Caco-2 (cell line): ENCODE measurements at regions of chr2 and their contacts with region 1.

Region 1: DNA sequence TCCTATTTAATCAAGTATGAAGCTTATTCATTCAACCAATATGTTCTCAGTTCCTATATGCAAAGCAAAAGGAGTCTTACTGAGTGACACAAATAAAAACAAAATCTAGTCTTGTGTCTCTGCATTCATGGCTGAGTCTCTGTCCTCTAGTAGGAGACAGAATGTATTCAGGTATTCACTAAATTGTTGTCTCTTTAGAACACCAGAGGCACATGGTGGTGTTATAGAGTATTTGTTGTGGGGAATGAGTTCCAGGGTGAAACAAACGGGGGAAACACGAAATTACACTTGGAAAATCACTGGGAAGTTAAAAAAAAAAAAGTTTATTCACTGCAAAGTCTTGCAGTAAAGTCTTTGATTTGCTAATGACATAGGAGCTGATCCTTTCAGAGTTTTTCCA is 131.7 kb upstream of the FSHR start:
- DNase-seq: peak in 1 of 2 experiments; percentile 16
- H3K4me3 ChIP-seq: no peak overlapping the region
- H3K4me3 Mint-ChIP-seq: no peak overlapping the region
- H3K27ac Mint-ChIP-seq: no peak overlapping the region
- H3K4me1 ChIP-seq: no peaks in the 10 kb centered on the region
- H3K4me1 Mint-ChIP-seq: no peaks in the 10 kb centered on the region
- H3K27me3 ChIP-seq: no peaks in the 10 kb centered on the region
- H3K27me3 Mint-ChIP-seq: peaks cover 9% of the 10 kb centered on the region
- CTCF ChIP-seq: peak; percentile 29 to 41

Region 2: DNA sequence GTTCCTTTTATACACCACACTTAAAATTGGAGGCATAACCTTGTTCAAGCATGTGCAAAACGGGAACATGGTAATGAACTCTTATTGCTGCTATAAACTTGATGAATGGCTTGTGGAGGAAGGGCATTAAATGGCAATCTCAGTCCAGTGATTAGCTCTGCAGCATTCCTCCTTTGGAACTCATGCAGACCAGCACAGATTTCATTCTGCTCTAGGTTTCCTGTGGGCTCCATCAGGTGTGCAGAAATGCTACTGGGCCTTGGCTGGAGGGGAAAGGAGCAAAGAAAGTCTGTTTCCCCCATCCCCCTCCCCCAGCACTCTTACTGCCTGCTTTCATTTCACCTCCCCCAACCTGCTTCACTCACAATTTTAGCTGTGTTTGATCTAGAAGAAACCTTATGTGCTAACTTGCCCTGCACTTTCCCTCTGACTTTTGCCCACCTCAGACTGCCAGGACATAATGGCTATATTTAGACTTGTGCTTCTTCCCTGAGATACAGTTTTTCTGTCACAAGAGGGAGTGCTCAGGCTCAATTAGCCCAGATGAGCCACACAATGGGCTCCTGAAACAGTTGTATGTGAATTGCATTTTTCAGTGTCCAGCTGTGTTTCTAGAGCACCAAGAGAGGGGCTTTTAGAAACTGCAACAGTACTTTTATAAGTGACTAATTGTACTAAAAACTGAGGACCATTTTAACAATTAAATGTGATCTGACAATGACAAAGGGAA is 241.5 kb before region 1 on chr2:
- CTCF ChIA-PET with region 1: no interaction called
- POLR2A ChIA-PET with region 1: no interaction called
- intact Hi-C with region 1: loop called (anchors 1 kb)
- DNase-seq: peak in 1 of 2 experiments; percentile 18
- H3K4me3 ChIP-seq: no peak overlapping the region
- H3K4me3 Mint-ChIP-seq: no peak overlapping the region
- H3K27ac Mint-ChIP-seq: no peak overlapping the region
- H3K4me1 ChIP-seq: no peaks in the 10 kb centered on the region
- H3K4me1 Mint-ChIP-seq: no peaks in the 10 kb centered on the region
- H3K27me3 ChIP-seq: no peaks in the 10 kb centered on the region
- H3K27me3 Mint-ChIP-seq: peaks cover 3% of the 10 kb centered on the region
- CTCF ChIP-seq: peak; percentile 37 to 43

Region 3: GRCh38 chr2:49189512-49190225 is 96.4 kb before region 1 on chr2:
- CTCF ChIA-PET with region 1: no interaction called
- POLR2A ChIA-PET with region 1: no interaction called
- intact Hi-C with region 1: no loop called
- DNase-seq: no peak
- H3K4me3 ChIP-seq: no peak overlapping the region
- H3K4me3 Mint-ChIP-seq: no peak overlapping the region
- H3K27ac Mint-ChIP-seq: no peak overlapping the region
- H3K4me1 ChIP-seq: no peaks in the 10 kb centered on the region
- H3K4me1 Mint-ChIP-seq: no peaks in the 10 kb centered on the region
- H3K27me3 ChIP-seq: no peaks in the 10 kb centered on the region
- H3K27me3 Mint-ChIP-seq: peaks cover 5% of the 10 kb centered on the region
- CTCF ChIP-seq: no peak